CD4-positive, alpha-beta T cell (primary cell): ENCODE measurements at regions of chr6 and their contacts with region 1.

Region 1: GRCh38 chr6:41936073-41936837 is 5.4 kb downstream of the CCND3 start:
- DNase-seq: peak; percentile 32 to 95 (median 54)
- ATAC-seq: peak; percentile 53
- H3K4me3 ChIP-seq: peak overlapping the region; percentile 21
- H3K4me3 Mint-ChIP-seq: peak overlapping the region; percentile 85
- H3K27ac ChIP-seq: peak overlapping the region; percentile 63 to 64
- H3K27ac Mint-ChIP-seq: peak overlapping the region; percentile 93
- H3K4me1 ChIP-seq: peaks cover 73% of the 10 kb centered on the region
- H3K4me1 Mint-ChIP-seq: peaks cover 75% of the 10 kb centered on the region
- H3K27me3 ChIP-seq: no peaks in the 10 kb centered on the region
- H3K27me3 Mint-ChIP-seq: no peaks in the 10 kb centered on the region
- CTCF ChIP-seq: peak; percentile 77

Region 2: GRCh38 chr6:40563111-40563510 is 1373.1 kb before region 1 on chr6:
- CTCF ChIA-PET with region 1: no interaction called
- POLR2A ChIA-PET with region 1: no interaction called
- intact Hi-C with region 1: no loop called
- DNase-seq: no peak
- ATAC-seq: no peak
- H3K4me3 ChIP-seq: no peak overlapping the region
- H3K4me3 Mint-ChIP-seq: no peak overlapping the region
- H3K27ac ChIP-seq: no peak overlapping the region
- H3K27ac Mint-ChIP-seq: no peak overlapping the region
- H3K4me1 ChIP-seq: no peaks in the 10 kb centered on the region
- H3K4me1 Mint-ChIP-seq: no peaks in the 10 kb centered on the region
- H3K27me3 ChIP-seq: no peaks in the 10 kb centered on the region
- H3K27me3 Mint-ChIP-seq: peaks cover 4% of the 10 kb centered on the region
- CTCF ChIP-seq: no peak

Region 3: GRCh38 chr6:41846666-41847237 is 89.5 kb before region 1 on chr6:
- CTCF ChIA-PET with region 1: no interaction called
- POLR2A ChIA-PET with region 1: no interaction called
- intact Hi-C with region 1: loop called in 1 of 2 experiments (anchors 5 kb)
- DNase-seq: peak; percentile 18 to 77 (median 37)
- ATAC-seq: peak; percentile 78
- H3K4me3 ChIP-seq: no peak overlapping the region
- H3K4me3 Mint-ChIP-seq: no peak overlapping the region
- H3K27ac ChIP-seq: no peak overlapping the region
- H3K27ac Mint-ChIP-seq: no peak overlapping the region
- H3K4me1 ChIP-seq: no peaks in the 10 kb centered on the region
- H3K4me1 Mint-ChIP-seq: peaks cover 6% of the 10 kb centered on the region
- H3K27me3 ChIP-seq: no peaks in the 10 kb centered on the region
- H3K27me3 Mint-ChIP-seq: no peaks in the 10 kb centered on the region
- CTCF ChIP-seq: peak; percentile 91

Region 4: GRCh38 chr6:41859356-41859755 is 76.9 kb before region 1 on chr6:
- CTCF ChIA-PET with region 1: no interaction called
- POLR2A ChIA-PET with region 1: no interaction called
- intact Hi-C with region 1: no loop called
- DNase-seq: no peak
- ATAC-seq: no peak
- H3K4me3 ChIP-seq: no peak overlapping the region
- H3K4me3 Mint-ChIP-seq: no peak overlapping the region
- H3K27ac ChIP-seq: no peak overlapping the region
- H3K27ac Mint-ChIP-seq: no peak overlapping the region
- H3K4me1 ChIP-seq: no peaks in the 10 kb centered on the region
- H3K4me1 Mint-ChIP-seq: no peaks in the 10 kb centered on the region
- H3K27me3 ChIP-seq: no peaks in the 10 kb centered on the region
- H3K27me3 Mint-ChIP-seq: no peaks in the 10 kb centered on the region
- CTCF ChIP-seq: no peak

Region 5: GRCh38 chr6:41920921-41921711 is 15.1 kb before region 1 on chr6 and contains the starts of genes BYSL and MED20:
- CTCF ChIA-PET with region 1: interaction called, 84 read pairs
- POLR2A ChIA-PET with region 1: interaction called, 35 read pairs
- intact Hi-C with region 1: loop called (anchors 1 kb)
- DNase-seq: peak; percentile 89 to 97 (median 93)
- ATAC-seq: peak; percentile 90
- H3K4me3 ChIP-seq: peak within 1 kb of the TSS; percentile 78
- H3K4me3 Mint-ChIP-seq: peak within 1 kb of the TSS; percentile 99
- H3K27ac ChIP-seq: peak within 1 kb of the TSS; percentile 97 to 98
- H3K27ac Mint-ChIP-seq: peak within 1 kb of the TSS; percentile 94
- H3K4me1 ChIP-seq: peaks cover 31% of the 10 kb centered on the region
- H3K4me1 Mint-ChIP-seq: peaks cover 55% of the 10 kb centered on the region
- H3K27me3 ChIP-seq: no peaks in the 10 kb centered on the region
- H3K27me3 Mint-ChIP-seq: no peaks in the 10 kb centered on the region
- CTCF ChIP-seq: peak; percentile 97
- total RNA-seq, gene BYSL: 1.2 to 1.6 TPM
- total RNA-seq, gene MED20: 1.3 to 1.6 TPM

Region 6: DNA sequence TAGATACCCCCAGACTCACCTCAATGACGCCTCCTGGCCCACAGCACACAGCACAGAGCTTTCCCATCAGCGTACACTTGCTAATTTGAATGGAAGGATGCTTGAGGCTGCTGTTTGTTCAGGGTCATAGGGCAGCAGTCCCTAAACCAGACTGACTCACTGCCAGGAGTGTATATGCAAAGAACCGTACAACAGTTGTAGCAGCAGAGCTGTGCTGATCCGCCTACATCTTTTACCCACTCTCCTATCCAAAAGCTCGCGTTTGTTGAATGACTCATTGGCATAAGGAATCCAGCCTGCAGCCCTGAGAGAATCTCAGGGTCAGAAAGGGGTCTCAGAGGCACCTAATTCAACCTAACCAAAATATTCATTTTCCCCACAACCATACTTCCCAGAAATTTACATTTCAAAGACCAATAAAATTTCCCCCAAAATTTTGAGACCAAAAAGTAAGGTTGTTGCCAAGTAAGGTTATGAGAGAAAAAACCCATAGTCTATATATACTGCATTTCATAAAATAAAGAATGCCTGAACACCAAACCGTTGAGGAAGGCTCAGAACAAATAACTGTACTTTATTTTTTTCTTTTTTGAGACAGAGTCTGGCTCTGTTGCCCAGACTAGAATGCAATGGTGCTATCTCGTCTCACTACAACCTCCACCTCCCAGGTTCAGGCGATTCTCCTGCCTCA is 40.7 kb after region 1 on chr6:
- CTCF ChIA-PET with region 1: no interaction called
- POLR2A ChIA-PET with region 1: interaction called, 6 read pairs
- intact Hi-C with region 1: loop called (anchors 2 to 5 kb)
- DNase-seq: peak in 1 of 14 experiments; percentile 21
- ATAC-seq: peak; percentile 27
- H3K4me3 ChIP-seq: no peak overlapping the region
- H3K4me3 Mint-ChIP-seq: peak overlapping the region; percentile 43
- H3K27ac ChIP-seq: peak overlapping the region in 1 of 2 donors; percentile 3
- H3K27ac Mint-ChIP-seq: peak overlapping the region; percentile 90
- H3K4me1 ChIP-seq: peaks cover 79% of the 10 kb centered on the region
- H3K4me1 Mint-ChIP-seq: peaks cover 70% of the 10 kb centered on the region
- H3K27me3 ChIP-seq: no peaks in the 10 kb centered on the region
- H3K27me3 Mint-ChIP-seq: no peaks in the 10 kb centered on the region
- CTCF ChIP-seq: no peak

Region 7: DNA sequence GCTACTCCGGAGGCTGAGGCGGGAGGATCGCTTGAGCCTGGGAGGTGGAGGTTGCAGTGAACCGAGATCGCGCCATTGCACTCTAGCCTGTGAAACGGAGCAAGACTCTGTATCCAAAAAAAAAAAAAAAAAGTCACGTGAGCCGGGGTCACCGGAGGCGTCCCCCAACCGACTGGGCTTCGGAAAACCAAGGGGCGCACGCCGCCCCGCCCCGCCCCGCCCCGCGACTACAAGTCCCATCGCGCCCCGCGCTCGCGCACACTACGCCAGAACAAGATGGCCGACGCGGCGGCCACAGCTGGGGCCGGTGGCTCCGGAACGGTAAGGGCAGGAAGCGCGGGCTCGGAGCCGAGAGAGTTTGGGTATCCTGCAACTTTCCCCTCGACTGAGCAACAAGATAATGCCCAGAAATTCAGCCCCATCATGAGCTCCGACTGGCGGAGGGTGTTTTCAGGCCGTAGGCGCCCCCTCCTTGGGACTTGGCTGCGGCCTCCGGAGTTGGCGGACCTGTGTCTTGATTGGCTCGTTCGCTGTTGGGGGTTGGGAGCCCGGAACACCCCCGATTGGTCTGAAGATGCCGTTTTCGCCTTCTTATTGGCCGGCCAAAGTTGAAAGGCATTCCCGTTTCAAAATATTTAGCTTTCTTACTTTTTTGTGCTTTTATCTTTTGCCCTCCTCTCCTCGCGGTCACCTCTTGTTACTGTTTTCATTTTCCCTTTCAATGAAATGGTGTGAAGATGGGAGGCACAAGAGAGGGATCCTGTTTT is 114.2 kb after region 1 on chr6 and contains the start of gene TAF8:
- CTCF ChIA-PET with region 1: interaction called, 24 read pairs
- POLR2A ChIA-PET with region 1: interaction called, 168 read pairs
- intact Hi-C with region 1: no loop called
- DNase-seq: peak; percentile 78 to 95 (median 84)
- ATAC-seq: peak; percentile 53
- H3K4me3 ChIP-seq: peak within 1 kb of the TSS; percentile 85
- H3K4me3 Mint-ChIP-seq: peak within 1 kb of the TSS; percentile 96
- H3K27ac ChIP-seq: peak within 1 kb of the TSS; percentile 85 to 89
- H3K27ac Mint-ChIP-seq: peak within 1 kb of the TSS; percentile 89
- H3K4me1 ChIP-seq: peaks cover 61% of the 10 kb centered on the region
- H3K4me1 Mint-ChIP-seq: peaks cover 72% of the 10 kb centered on the region
- H3K27me3 ChIP-seq: no peaks in the 10 kb centered on the region
- H3K27me3 Mint-ChIP-seq: no peaks in the 10 kb centered on the region
- CTCF ChIP-seq: no peak
- total RNA-seq, gene TAF8: 30.1 to 34.7 TPM